Cardiac septum (tissue), 1 donor: ENCODE measurements at regions of chr9 and their contacts with region 1.

Region 1: DNA sequence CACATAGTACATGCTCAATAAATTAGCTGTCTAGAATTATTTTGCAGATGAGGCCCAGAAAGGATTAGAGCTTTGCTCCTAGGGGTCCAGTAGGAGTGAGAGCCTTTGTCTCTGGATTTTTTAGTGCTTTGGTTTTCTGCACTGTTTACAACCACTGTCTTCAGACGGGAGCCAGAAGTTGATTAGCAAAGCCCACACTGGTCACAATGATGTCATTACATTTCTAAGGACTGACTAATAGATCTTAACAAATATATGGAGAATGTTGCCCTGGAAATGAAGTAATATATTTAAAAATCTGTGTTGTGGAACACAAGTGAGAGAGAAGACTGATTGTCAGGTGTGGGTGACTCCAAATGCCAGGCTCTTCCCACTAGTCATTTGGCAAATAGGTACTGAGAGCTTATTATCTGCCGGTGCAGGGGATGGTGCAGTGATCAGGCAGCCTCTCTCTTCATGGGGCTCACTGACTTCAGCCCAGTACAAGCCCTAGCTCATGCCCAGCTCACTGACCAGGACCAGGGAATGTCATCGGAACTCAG is 76.2 kb downstream of the COL15A1 start:
- DNase-seq: no peak

Region 2: GRCh38 chr9:98306384-98307160 is 713.3 kb before region 1 on chr9:
- intact Hi-C with region 1: no loop called
- DNase-seq: no peak

Region 3: GRCh38 chr9:99140685-99141314 is 120.9 kb after region 1 on chr9:
- intact Hi-C with region 1: loop called (anchors 5 kb)
- DNase-seq: no peak

Region 4: DNA sequence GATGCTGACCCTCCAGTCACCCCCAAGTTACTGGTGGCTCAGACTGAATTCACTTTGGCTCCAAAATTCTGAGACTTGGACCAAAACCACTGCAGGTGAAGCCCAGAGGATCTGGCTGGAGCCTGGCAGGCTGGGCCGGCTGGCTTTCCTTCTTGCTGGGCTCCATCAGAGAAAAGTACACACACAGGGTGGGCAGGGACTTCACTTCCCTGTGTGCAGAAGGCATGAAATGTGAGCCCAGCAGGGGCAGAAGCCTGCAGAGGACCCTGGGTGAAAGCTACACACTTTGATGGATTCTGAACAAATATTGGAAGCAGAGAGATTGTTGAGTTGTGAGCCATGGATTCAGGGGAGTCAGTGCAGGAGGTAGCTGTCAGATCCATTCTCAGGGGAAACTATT is 820.2 kb after region 1 on chr9:
- intact Hi-C with region 1: no loop called
- DNase-seq: no peak